ENCODE measurements at regions of chr17 and their contacts with region 1.

Region 1: DNA sequence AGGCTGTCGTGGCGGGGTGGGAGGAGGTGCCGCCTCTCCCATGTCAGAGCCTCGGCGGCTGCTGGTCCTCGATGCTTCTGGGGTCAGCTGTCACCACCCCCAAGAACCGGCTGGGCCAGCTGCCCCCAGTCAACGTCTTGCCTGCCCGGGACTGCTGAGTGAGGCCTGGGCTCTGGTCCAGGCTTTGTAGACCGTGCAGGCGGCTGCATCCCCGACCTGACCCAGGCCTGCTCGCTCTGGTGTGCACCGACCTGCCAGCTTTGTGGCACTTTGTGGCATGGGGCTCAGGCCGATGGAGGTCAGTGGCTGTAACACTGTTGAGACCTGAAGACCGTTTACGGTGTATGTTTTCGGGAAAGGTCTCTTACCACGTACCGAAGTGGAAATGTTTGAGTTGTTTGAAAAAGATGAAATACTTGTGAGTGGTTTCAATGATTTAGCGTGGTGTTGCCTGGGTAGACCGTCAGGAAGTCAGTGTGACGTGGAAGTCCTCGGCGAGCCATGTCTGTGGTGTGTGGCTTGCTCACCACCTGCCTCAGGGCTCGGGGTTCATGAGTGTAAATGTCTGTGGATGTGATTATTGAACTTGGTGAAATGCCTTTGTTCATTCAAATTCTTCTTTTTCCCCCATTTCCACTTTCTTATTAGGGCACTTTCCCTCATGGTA is 53.2 kb upstream of the ZNF750 start:
- H3K4me3 ChIP-seq: no peak overlapping the region
- H3K27ac ChIP-seq: no peak overlapping the region
- H3K4me1 ChIP-seq: peaks cover 3% of the 10 kb centered on the region; the same call in 1 of the 2 replicates
- CTCF ChIP-seq: no peak

Region 2: GRCh38 chr17:82679586-82680465 is 213.2 kb before region 1 on chr17:
- CTCF ChIA-PET with region 1: interaction called, 11 read pairs
- POLR2A ChIA-PET with region 1: no interaction called
- H3K4me3 ChIP-seq: no peak overlapping the region
- H3K27ac ChIP-seq: no peak overlapping the region
- H3K4me1 ChIP-seq: no peaks in the 10 kb centered on the region
- CTCF ChIP-seq: no peak

Region 3: DNA sequence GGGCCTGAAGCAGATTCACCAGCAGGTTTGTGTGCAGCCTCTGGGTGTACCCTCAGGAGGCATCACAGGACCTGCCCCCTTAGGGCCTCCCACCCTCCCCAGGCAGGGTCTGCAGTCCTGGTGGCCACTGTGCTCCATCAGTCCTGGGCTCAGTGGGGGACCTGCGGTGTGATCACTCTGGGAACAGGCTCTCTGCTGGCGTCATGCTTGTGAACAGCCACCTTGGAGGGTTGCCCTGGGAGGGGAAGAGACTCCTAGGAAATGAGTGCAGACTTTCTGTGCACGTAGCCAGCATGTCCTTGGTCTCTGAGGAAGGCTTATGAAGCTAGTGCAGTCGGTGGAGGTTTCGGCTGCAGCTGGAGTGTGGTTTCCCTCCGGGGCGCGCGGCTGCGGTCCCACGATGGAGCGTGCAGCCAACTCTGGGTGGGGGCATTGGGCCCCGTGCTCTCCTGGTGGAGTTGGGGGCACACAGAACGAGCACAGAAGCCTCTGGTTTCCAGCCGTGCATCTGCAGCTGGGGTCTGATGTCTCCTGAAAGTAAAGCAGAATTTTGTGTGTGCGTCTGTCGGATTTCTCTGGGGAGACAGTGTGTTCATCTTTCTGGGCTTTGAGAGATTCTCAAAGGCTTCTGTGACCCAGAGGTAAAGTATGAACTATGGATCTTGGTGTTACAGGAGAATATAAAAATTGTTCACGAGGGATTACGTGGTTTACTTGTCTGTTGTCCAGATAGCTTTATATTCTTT is 14.9 kb after region 1 on chr17:
- CTCF ChIA-PET with region 1: no interaction called
- POLR2A ChIA-PET with region 1: no interaction called
- H3K4me3 ChIP-seq: no peak overlapping the region
- H3K27ac ChIP-seq: no peak overlapping the region
- H3K4me1 ChIP-seq: no peaks in the 10 kb centered on the region
- CTCF ChIP-seq: no peak